HEK293T (cell line): ENCODE measurements at regions of chr10 and their contacts with region 1.

Region 1: DNA sequence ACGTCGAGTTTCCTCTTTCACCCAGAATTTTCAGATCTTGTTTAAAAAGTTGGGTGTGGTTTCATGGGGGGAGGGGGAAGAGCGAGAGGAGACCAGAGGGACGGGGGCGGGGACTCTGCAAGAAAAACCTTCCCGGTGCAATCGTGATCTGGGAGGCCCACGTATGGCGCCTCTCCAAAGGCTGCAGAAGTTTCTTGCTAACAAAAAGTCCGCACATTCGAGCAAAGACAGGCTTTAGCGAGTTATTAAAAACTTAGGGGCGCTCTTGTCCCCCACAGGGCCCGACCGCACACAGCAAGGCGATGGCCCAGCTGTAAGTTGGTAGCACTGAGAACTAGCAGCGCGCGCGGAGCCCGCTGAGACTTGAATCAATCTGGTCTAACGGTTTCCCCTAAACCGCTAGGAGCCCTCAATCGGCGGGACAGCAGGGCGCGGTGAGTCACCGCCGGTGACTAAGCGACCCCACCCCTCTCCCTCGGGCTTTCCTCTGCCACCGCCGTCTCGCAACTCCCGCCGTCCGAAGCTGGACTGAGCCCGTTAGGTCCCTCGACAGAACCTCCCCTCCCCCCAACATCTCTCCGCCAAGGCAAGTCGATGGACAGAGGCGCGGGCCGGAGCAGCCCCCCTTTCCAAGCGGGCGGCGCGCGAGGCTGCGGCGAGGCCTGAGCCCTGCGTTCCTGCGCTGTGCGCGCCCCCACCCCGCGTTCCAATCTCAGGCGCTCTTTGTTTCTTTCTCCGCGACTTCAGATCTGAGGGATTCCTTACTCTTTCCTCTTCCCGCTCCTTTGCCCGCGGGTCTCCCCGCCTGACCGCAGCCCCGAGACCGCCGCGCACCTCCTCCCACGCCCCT is at the start of gene VIM:
- DNase-seq: peak; percentile 64

Region 2: GRCh38 chr10:17062955-17063484 is 165.3 kb before region 1 on chr10:
- CTCF ChIA-PET with region 1: no interaction called
- POLR2A ChIA-PET with region 1: interaction called, 12 read pairs
- DNase-seq: no peak

Region 3: DNA sequence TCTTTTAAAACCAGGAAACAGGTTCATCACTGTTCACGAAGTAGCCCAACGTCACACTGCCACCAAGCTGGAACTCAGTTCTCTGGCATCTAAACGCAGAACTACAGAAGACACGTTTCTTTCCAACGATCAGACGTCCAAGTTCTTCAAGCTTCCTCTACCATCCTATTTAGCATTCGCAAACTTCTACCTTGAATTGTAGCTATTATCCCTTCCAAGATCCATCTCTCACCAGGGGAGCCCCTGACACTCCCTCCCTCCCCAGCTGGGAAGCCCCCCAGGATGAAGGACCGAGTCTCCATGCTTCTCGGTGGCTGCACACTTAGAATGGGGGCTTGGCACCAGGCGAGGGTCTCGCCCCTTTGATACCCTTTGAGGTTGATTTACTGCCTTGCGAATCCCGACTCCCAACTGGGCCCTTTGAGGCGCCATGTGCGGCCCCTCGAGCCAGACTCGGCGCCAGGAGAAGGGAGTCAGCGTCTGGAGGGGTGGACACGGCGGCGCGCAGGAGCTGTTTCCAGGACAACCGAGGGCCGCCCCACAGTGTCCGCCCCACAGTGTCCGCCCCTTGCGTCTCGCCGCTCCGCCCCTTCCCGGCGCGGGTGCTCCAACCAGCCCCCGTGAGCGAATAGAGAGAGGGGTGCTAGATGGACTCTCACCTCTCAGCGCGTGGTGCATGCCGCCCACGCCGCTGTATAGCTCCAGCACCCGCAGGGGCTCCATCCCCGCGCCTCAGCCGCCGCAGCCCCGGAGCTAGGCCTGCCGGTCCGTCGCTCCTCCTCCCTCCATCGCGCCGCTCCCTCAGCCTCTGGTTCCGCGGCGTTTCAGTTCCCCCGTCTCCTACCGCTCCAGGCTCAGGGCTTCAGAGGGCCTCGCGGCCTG is 27.2 kb before region 1 on chr10 and contains the start of gene TRDMT1:
- CTCF ChIA-PET with region 1: interaction called, 4 read pairs
- POLR2A ChIA-PET with region 1: interaction called, 104 read pairs
- DNase-seq: peak; percentile 82

Region 4: DNA sequence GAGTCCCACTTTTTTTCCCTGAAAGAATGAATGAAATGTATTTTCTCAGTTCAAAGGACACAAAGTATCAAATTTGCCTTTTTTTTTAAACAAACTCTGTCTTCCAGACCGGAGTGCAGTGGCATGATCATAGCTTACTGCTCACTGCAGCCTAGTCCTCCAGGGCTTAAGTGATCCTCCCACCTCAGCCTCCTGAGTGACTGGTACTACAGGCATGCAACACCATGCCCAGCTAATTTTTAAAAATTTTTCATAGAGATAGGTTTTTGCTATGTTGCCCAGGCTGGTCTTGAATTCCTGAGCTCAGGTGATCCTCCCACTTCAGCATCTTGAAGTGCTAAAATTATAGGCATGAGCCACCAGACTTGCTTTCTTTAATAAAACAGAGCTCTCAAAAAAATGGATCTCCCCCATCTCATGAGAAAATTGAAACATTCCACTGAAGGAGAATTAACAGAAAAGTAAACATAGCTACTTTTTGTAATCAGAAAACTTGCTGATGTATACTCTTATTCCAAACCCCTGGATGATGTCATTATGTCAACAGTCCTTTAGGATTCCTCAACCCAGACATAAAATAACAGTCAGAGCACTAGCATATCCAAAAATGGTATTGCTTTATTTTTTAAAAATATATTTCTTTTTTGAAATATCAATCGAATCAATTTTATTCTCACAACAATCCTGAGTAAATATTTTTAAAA is 14.5 kb before region 1 on chr10:
- CTCF ChIA-PET with region 1: interaction called, 6 read pairs
- POLR2A ChIA-PET with region 1: interaction called, 57 read pairs
- DNase-seq: no peak

Region 5: DNA sequence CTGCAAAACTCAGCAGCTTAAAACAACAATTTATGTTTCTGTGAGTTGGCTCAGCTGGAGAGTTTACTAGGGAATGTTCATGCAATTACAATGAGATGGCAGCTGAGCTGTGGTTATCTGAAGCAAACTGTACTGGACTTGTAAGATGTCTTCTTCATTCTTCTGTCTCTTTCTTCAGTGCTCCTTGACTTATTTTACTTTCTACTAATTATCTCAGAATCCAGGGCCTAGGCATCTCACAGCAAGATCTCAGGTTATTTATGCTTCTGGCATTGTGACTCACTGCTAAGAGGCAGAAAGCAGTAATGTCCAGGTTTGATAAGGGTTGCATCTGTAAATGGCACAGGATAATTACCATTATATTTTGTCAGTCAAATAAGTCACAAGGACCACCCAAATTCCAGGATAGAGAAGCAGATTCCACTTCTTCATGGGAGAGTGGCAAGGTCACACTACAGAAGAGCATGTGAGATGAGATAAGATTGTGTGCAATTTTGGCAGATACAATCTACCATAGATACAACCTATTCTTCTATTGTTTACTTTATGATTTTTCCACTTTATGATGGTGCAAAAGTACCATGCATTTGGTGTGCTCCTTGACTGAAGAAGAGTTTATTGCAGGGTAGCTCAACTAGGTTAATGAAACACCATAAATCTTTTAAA is 16.5 kb after region 1 on chr10:
- CTCF ChIA-PET with region 1: no interaction called
- POLR2A ChIA-PET with region 1: interaction called, 27 read pairs
- DNase-seq: no peak